Activated B cell treated with CpG ODN at 0.5 μM for 24 hours (primary cell): ENCODE measurements at regions of chr5 and their contacts with region 1.

Region 1: GRCh38 chr5:134004592-134005375 is at the start of gene VDAC1:
- DNase-seq: peak; percentile 81
- ATAC-seq: peak; percentile 82
- H3K4me3 Mint-ChIP-seq: peak within 1 kb of the TSS; percentile 92
- H3K27ac Mint-ChIP-seq: peak within 1 kb of the TSS; percentile 93
- H3K4me1 Mint-ChIP-seq: peaks cover 38% of the 10 kb centered on the region
- H3K27me3 Mint-ChIP-seq: no peaks in the 10 kb centered on the region
- CTCF ChIP-seq: no peak
- total RNA-seq, gene VDAC1: 158 and 164 TPM in 2 replicates

Region 2: DNA sequence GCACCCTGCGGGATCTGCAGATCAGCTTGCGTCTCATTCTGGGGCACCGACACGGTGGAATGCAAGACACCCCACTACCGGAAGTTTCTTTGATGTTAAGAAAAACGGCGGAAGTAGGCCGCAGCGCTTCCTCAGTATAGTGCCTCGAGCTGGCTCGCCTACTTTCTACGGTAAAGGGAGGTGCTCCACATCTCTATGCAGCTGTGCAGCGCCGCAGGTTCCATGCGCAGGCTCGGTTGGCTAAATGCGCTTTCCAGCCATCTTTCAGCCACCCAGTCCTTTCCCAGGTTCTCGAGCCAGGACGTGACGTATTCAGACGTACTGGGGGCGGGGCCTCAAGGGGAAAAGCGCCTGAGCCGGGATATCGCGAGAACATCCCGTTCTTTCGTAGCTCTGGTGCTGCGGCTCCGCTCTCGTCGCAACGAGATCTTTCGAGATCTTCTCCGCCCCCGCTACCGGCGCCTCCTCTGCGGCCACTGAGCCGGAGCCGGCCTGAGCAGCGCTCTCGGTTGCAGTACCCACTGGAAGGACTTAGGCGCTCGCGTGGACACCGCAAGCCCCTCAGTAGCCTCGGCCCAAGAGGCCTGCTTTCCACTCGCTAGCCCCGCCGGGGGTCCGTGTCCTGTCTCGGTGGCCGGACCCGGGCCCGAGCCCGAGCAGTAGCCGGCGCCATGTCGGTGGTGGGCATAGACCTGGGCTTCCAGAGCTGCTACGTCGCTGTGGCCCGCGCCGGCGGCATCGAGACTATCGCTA is 953.0 kb before region 1 on chr5 and contains the start of gene HSPA4:
- CTCF ChIA-PET with region 1: no interaction called
- POLR2A ChIA-PET with region 1: interaction called, 4 read pairs
- intact Hi-C with region 1: loop called (anchors 2 kb)
- DNase-seq: peak; percentile 93
- ATAC-seq: peak; percentile 85
- H3K4me3 Mint-ChIP-seq: peak within 1 kb of the TSS; percentile 96
- H3K27ac Mint-ChIP-seq: peak within 1 kb of the TSS; percentile 99
- H3K4me1 Mint-ChIP-seq: peaks cover 64% of the 10 kb centered on the region
- H3K27me3 Mint-ChIP-seq: no peaks in the 10 kb centered on the region
- CTCF ChIP-seq: no peak
- total RNA-seq, gene HSPA4: 152 and 162 TPM in 2 replicates

Region 3: GRCh38 chr5:133938929-133939328 is 65.9 kb before region 1 on chr5:
- CTCF ChIA-PET with region 1: no interaction called
- POLR2A ChIA-PET with region 1: interaction called, 8 read pairs
- intact Hi-C with region 1: loop called (anchors 2 kb)
- DNase-seq: peak; percentile 4
- ATAC-seq: no peak
- H3K4me3 Mint-ChIP-seq: peak overlapping the region; percentile 48
- H3K27ac Mint-ChIP-seq: peak overlapping the region; percentile 89
- H3K4me1 Mint-ChIP-seq: peaks cover 91% of the 10 kb centered on the region
- H3K27me3 Mint-ChIP-seq: no peaks in the 10 kb centered on the region
- CTCF ChIP-seq: no peak

Region 4: GRCh38 chr5:133957591-133957990 is 47.2 kb before region 1 on chr5:
- CTCF ChIA-PET with region 1: no interaction called
- POLR2A ChIA-PET with region 1: interaction called, 11 read pairs
- intact Hi-C with region 1: no loop called
- DNase-seq: no peak
- ATAC-seq: peak; percentile 82
- H3K4me3 Mint-ChIP-seq: peak overlapping the region; percentile 56
- H3K27ac Mint-ChIP-seq: peak overlapping the region; percentile 86
- H3K4me1 Mint-ChIP-seq: peaks cover 58% of the 10 kb centered on the region
- H3K27me3 Mint-ChIP-seq: no peaks in the 10 kb centered on the region
- CTCF ChIP-seq: no peak

Region 5: GRCh38 chr5:133968049-133968980 is 36.5 kb before region 1 on chr5 and contains the start of gene C5orf15:
- CTCF ChIA-PET with region 1: no interaction called
- POLR2A ChIA-PET with region 1: interaction called, 10 read pairs
- intact Hi-C with region 1: loop called (anchors 1 kb)
- DNase-seq: peak; percentile 83
- ATAC-seq: peak; percentile 90
- H3K4me3 Mint-ChIP-seq: peak within 1 kb of the TSS; percentile 95
- H3K27ac Mint-ChIP-seq: peak within 1 kb of the TSS; percentile 96
- H3K4me1 Mint-ChIP-seq: peaks cover 58% of the 10 kb centered on the region
- H3K27me3 Mint-ChIP-seq: no peaks in the 10 kb centered on the region
- CTCF ChIP-seq: no peak
- total RNA-seq, gene C5orf15: 25.5 and 25.7 TPM in 2 replicates

Region 6: DNA sequence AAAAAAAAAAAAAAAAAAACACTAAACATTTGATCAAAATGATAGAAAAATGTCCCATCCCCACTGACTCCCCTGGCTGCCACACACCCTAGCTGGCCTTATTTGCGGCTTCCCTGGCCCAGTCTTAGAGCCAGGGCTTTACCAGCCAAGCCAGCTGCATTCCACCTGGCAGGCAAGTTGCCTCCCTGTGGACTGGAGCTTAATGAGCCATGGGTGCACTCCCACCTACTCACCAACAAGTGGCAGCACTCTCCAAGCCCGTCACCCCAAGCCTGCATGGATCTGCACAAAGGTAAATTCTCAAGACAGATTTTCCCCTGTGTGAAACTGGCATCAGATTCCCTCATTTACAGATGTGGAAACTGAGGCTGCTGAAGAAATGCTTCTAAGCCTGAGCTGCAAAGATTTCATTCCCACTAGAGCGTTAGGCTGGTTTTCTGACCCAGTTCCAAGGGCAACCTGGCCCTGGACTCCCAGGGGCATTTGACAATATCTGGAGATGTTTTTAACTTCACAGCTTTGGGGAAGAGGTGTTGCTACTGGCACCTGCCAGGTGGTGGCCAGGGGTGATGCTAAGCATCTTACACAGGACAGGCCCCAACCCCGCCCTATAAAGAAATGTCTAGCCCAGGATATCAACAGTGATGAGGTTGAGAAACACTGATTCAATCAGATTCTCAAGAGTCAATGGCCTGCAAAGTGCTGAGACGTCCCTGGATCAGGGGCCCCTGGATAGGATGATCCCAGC is 21.9 kb after region 1 on chr5:
- CTCF ChIA-PET with region 1: no interaction called
- POLR2A ChIA-PET with region 1: interaction called, 6 read pairs
- intact Hi-C with region 1: loop called (anchors 2 kb)
- DNase-seq: no peak
- ATAC-seq: peak; percentile 84
- H3K4me3 Mint-ChIP-seq: no peak overlapping the region
- H3K27ac Mint-ChIP-seq: no peak overlapping the region
- H3K4me1 Mint-ChIP-seq: peaks cover 19% of the 10 kb centered on the region
- H3K27me3 Mint-ChIP-seq: no peaks in the 10 kb centered on the region
- CTCF ChIP-seq: no peak

Region 7: DNA sequence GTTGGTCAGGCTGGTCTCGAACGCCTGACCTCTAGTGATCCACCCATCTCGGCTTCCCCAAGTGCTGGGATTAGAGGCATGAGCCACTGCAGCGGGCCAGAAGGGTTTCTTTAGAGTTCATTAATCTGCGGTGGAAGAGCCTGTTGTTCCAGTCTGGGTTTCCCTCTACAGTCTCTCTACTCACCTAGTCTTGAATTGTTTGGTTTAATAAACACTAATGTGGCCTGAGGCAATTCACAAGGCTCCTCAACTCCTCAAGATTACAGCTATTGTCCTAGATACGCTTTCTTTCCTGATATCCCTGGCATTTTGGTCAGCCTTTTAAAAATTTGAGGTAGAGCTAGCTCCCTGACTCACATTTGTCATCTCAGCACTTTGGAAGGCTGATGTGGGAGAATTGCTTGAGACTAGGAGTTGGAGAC is 632.4 kb after region 1 on chr5:
- CTCF ChIA-PET with region 1: no interaction called
- POLR2A ChIA-PET with region 1: no interaction called
- intact Hi-C with region 1: loop called (anchors 10 kb)
- DNase-seq: no peak
- ATAC-seq: no peak
- H3K4me3 Mint-ChIP-seq: no peak overlapping the region
- H3K27ac Mint-ChIP-seq: no peak overlapping the region
- H3K4me1 Mint-ChIP-seq: peaks cover 2% of the 10 kb centered on the region
- H3K27me3 Mint-ChIP-seq: no peaks in the 10 kb centered on the region
- CTCF ChIP-seq: no peak